ENCODE measurements at regions of chr5 and their contacts with region 1.

Region 1: DNA sequence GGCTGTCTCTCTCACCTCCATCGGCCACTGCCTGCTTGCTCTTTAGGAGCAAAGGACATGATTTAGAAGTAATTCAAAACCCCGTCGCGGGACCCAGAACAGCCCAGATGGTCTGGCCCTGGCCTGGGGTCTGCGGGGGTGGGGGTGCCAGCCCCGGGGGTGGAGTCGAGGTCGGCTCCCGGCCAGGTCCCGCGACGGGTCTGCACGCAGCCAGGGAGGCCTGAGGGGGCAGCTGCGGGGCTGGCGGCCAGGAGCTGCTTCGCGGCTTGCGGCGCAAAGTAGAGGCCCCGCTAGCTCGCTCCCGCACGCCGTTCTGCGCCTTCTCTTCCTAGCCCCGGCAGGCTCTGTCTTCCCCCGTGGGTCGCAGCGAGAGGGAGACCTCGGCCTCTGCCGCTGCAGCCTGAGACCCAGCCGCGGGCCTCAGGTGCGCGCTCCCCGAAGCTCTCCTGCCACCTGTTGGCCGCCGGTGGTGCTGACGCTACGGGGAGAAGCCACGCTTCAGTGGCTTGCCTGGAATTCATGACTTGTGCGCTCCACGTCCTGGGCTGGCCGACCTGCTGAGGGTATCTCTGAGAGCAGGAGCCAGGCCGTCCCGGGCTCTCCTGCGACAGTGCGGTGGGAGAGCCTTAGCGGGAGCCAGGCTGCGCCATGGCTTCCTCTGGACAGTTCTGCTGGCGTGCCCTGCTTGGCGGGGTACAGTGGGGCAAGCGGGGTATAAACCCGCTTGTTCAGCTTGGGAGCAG is 157.2 kb upstream of the PITX1 start:
- DNase-seq: peak; percentile 70 to 88 (median 73)
- ATAC-seq: peak; percentile 85
- H3K4me3 ChIP-seq: peak overlapping the region; percentile 28
- H3K27ac ChIP-seq: peak overlapping the region; percentile 62; the same call in 2 of the 3 replicates
- H3K4me1 ChIP-seq: peaks cover 36 to 52% of the 10 kb centered on the region in 2 experiments; a peak in 4 of 5 replicates
- H3K27me3 ChIP-seq: no peaks in the 10 kb centered on the region
- CTCF ChIP-seq: peak; percentile 85 to 97 (median 91)
- EP300 ChIP-seq: no peak
- POLR2A ChIP-seq: peak; percentile 31; the same call in 1 of the 2 replicates
- RAD21 ChIP-seq: peak; percentile 84 to 91

Region 2: DNA sequence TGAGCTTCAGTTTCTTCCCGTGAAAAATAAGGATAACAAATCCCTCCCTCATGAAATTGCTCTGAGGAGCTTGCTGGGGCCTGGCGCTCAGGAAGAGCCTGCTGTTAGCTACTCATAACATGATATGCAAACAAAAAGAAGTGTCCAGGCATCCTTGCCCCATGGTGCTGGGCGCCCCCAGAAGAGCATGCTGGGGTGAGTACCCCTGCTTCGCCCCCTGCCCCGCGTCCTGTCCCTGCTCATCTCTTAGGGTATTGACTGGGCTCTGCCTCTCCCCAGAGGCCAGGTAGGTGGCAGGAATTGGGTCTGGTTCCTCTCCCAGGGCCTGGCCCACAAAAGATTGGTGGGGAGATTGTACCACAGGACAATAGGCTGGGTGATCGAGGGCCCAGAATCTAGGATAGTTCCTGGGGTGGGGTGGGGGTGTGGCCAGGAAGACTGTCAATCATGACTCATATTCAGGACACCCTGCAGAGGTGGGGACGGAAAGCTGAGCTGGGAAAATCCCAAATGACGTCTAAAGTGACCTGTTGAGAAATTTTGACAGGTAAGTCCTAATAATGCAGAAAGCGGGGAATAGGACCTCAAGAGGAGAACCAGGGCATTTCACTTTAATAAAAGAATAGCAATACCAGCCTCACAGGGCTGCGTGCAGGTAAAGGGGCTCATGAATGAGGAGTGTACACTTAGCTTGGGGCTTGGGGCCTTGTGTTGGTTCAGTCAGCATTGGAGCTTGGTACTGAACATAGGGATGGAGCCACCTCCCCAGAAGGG is 166.1 kb before region 1 on chr5:
- CTCF ChIA-PET with region 1: no interaction called
- POLR2A ChIA-PET with region 1: interaction called, 10 read pairs
- in situ Hi-C with region 1: no loop called
- intact Hi-C with region 1: loop called (anchors 5 kb)
- DNase-seq: peak; percentile 59 to 78 (median 62)
- ATAC-seq: peak; percentile 76
- H3K4me3 ChIP-seq: no peak overlapping the region
- H3K27ac ChIP-seq: no peak overlapping the region
- H3K4me1 ChIP-seq: peaks cover 7 to 42% of the 10 kb centered on the region in 2 experiments; a peak in 4 of 5 replicates
- H3K27me3 ChIP-seq: no peaks in the 10 kb centered on the region
- CTCF ChIP-seq: no peak
- EP300 ChIP-seq: no peak
- POLR2A ChIP-seq: no peak
- RAD21 ChIP-seq: no peak

Region 3: GRCh38 chr5:135034236-135034962 is 156.9 kb before region 1 on chr5:
- CTCF ChIA-PET with region 1: no interaction called
- POLR2A ChIA-PET with region 1: interaction called, 7 read pairs
- in situ Hi-C with region 1: no loop called
- intact Hi-C with region 1: loop called (anchors 5 kb)
- DNase-seq: peak; percentile 93 to 96 (median 94)
- ATAC-seq: peak; percentile 84
- H3K4me3 ChIP-seq: peak overlapping the region; percentile 99
- H3K27ac ChIP-seq: peak overlapping the region; percentile 98
- H3K4me1 ChIP-seq: peaks cover 19 to 45% of the 10 kb centered on the region in 2 experiments
- H3K27me3 ChIP-seq: no peaks in the 10 kb centered on the region
- CTCF ChIP-seq: no peak
- EP300 ChIP-seq: no peak
- POLR2A ChIP-seq: peak; percentile 80
- RAD21 ChIP-seq: no peak

Region 4: GRCh38 chr5:135332519-135333150 is 141.4 kb after region 1 on chr5:
- CTCF ChIA-PET with region 1: no interaction called
- POLR2A ChIA-PET with region 1: no interaction called
- in situ Hi-C with region 1: no loop called
- intact Hi-C with region 1: loop called (anchors 5 kb)
- DNase-seq: peak; percentile 67 to 75 (median 71)
- ATAC-seq: peak; percentile 74
- H3K4me3 ChIP-seq: no peak overlapping the region
- H3K27ac ChIP-seq: no peak overlapping the region
- H3K4me1 ChIP-seq: no peaks in the 10 kb centered on the region; a peak in 1 of 5 replicates
- H3K27me3 ChIP-seq: no peaks in the 10 kb centered on the region
- CTCF ChIP-seq: peak; percentile 49 to 81 (median 66); a peak in 5 of 6 replicates
- EP300 ChIP-seq: no peak
- POLR2A ChIP-seq: no peak
- RAD21 ChIP-seq: peak; percentile 79 to 90

Measured in K562 (cell line).